Activated B cell treated with CpG ODN at 0.5 μM for 24 hours (primary cell): ENCODE measurements at regions of chr3 and their contacts with region 1.

Region 1: DNA sequence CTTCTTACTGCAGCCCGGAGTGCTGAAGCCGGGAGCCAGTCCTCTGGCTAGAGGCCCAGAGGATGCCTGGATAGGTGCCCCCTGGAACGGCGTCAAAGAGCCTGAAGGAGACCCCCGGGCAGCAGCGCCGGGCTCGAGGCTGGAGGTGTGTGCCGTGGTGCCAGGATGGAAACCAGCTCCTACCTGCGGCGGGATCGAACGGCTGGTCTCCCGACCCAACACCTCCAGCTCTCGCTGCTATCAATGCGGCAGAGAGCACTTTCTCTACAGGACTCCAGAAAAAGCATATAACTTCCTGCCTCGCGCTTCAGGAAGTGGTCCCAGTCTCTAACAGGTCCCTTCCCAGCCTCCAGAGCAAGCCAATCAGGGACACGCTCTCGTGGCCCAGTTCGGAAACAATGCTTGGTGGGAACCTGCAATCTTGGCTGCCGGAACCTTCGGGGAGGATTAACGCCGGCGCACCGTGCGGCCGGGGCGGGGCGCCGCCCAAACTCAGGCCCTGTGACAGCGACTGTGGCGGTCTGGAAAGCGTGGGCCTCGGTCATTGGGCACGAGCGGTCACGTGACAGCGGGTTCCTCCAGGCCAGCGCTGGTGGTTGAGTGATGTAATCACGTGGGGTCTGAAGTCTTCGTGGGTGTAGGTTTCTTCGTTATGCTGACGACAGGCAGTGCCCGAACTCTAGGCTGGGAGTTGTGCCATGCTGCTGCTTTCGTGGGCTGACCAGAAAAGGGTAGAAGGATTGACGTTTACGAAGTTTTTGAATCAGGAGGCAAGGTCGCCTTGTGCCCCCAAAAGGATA is at the start of gene SLC33A1:
- DNase-seq: peak; percentile 97
- ATAC-seq: peak; percentile 91
- H3K4me3 Mint-ChIP-seq: peak within 1 kb of the TSS; percentile 98
- H3K27ac Mint-ChIP-seq: peak within 1 kb of the TSS; percentile 98
- H3K4me1 Mint-ChIP-seq: peaks cover 41% of the 10 kb centered on the region
- H3K27me3 Mint-ChIP-seq: no peaks in the 10 kb centered on the region
- CTCF ChIP-seq: no peak
- total RNA-seq, gene SLC33A1: 19.8 and 23.3 TPM in 2 replicates

Region 2: DNA sequence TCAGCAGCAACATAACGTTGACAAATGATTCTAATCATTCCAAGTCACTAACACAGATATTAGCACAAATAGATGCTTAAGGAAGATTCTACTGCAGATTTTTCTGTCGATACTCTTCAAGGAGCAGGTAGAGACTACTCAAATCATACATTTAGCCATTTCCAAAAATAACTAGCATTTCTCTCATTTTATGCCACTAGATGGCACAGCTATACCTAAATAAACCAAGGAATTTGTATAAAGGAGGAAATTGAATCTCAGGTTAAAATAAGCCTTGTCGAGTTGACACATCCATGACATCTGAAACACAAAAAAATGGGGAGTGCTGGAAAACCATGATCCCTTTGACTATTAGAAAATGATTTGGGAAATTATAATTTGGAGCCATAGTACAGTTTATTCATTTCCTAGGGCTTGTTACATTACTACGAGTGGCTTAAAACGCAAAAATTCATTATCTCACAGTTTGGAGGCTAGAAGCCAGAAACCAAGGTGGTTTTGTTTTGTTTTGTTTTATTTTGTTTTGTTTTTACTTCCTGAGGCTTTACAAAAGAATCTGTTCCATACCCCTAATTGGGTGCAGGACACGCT is 501.3 kb before region 1 on chr3:
- CTCF ChIA-PET with region 1: no interaction called
- POLR2A ChIA-PET with region 1: no interaction called
- intact Hi-C with region 1: loop called (anchors 5 kb)
- DNase-seq: no peak
- ATAC-seq: no peak
- H3K4me3 Mint-ChIP-seq: no peak overlapping the region
- H3K27ac Mint-ChIP-seq: no peak overlapping the region
- H3K4me1 Mint-ChIP-seq: no peaks in the 10 kb centered on the region
- H3K27me3 Mint-ChIP-seq: peaks cover 2% of the 10 kb centered on the region
- CTCF ChIP-seq: no peak

Region 3: GRCh38 chr3:155727558-155728242 is 126.6 kb before region 1 on chr3:
- CTCF ChIA-PET with region 1: no interaction called
- POLR2A ChIA-PET with region 1: no interaction called
- intact Hi-C with region 1: no loop called
- DNase-seq: no peak
- ATAC-seq: no peak
- H3K4me3 Mint-ChIP-seq: no peak overlapping the region
- H3K27ac Mint-ChIP-seq: no peak overlapping the region
- H3K4me1 Mint-ChIP-seq: no peaks in the 10 kb centered on the region
- H3K27me3 Mint-ChIP-seq: peaks cover 2% of the 10 kb centered on the region
- CTCF ChIP-seq: no peak

Region 4: DNA sequence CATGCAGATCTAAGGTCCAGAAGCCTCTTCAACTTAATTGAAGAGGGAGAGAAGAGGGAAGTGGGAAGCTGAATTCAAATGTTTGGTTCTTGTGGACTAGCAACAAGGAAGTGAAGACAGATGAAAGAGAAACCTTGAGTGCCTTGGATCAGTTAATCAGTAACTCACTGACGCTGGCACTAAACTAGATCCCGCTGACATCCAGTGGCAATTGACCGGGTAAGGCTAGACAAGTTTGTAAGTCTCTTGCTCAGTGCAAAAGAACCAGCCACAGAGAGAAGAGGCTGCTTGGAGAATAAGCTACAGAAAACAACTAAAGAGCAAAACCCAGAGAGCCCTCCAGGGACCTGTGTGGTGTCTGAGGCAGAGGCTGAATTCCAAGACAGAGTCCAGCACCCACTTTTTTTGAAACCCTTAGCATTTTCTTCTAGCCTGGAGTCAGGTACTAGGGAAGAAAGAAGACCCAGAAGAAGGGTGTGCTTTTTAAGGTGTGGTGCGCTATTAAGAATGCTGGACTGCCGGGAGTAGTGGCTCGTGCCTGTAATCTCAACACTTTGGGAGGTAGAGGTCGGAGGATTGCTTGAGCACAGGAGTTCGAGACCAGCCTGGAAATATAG is 116.4 kb before region 1 on chr3:
- CTCF ChIA-PET with region 1: no interaction called
- POLR2A ChIA-PET with region 1: no interaction called
- intact Hi-C with region 1: no loop called
- DNase-seq: no peak
- ATAC-seq: peak; percentile 49
- H3K4me3 Mint-ChIP-seq: no peak overlapping the region
- H3K27ac Mint-ChIP-seq: no peak overlapping the region
- H3K4me1 Mint-ChIP-seq: peaks cover 13% of the 10 kb centered on the region
- H3K27me3 Mint-ChIP-seq: peaks cover 27% of the 10 kb centered on the region
- CTCF ChIP-seq: no peak

Region 5: DNA sequence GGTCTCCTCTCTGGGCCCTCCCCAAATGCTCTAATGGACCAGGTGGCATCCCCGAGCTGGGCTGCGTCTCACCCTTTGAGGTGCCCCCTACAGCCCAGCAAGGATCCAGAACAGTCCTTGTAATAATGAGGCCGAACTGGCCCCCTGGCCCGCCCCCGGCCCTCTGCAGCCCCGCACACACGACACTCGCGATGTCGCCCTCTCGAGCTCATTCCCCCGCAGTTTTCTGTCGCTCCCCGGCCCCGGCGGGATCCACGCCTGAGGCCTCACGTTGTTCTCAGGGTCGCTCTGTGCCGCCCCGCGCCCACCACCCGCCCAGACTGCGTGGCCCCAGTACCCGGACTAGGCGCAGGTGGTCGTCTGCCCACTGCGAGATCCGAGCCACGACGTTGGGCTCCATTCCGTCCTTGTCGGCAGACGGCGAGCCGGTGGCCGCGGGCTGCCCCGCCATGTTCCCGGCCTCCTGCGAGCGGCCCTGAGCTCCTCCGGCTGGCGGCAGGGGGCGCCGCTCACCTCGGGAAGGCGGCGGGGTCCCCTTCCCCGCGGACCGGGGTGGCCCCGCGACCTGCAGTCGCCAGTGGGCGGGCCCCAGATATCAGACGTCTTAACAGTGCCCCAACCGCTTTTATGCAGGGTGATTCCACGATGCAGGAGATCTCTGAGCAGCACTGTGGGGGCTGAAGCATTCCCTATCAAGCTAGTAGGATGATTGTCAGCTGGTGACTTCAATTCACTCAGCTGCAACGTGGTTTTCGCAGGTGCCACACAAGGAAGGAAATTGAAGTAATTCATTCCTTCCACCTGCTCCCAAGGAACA is 48.3 kb before region 1 on chr3 and contains the start of gene C3orf33:
- CTCF ChIA-PET with region 1: interaction called, 21 read pairs
- POLR2A ChIA-PET with region 1: interaction called, 21 read pairs
- intact Hi-C with region 1: loop called (anchors 1 kb)
- DNase-seq: peak; percentile 75
- ATAC-seq: peak; percentile 93
- H3K4me3 Mint-ChIP-seq: peak within 1 kb of the TSS; percentile 90
- H3K27ac Mint-ChIP-seq: peak within 1 kb of the TSS; percentile 80
- H3K4me1 Mint-ChIP-seq: peaks cover 3% of the 10 kb centered on the region
- H3K27me3 Mint-ChIP-seq: peaks cover 6% of the 10 kb centered on the region
- CTCF ChIP-seq: peak; percentile 82
- total RNA-seq, gene C3orf33: 1.6 and 2.4 TPM in 2 replicates

Region 6: GRCh38 chr3:156483961-156484787 is 629.8 kb after region 1 on chr3:
- CTCF ChIA-PET with region 1: no interaction called
- POLR2A ChIA-PET with region 1: interaction called, 3 read pairs
- intact Hi-C with region 1: loop called (anchors 5 kb)
- DNase-seq: peak; percentile 20
- ATAC-seq: peak; percentile 81
- H3K4me3 Mint-ChIP-seq: peak overlapping the region; percentile 79
- H3K27ac Mint-ChIP-seq: peak overlapping the region; percentile 93
- H3K4me1 Mint-ChIP-seq: peaks cover 32% of the 10 kb centered on the region
- H3K27me3 Mint-ChIP-seq: peaks cover under 1% of the 10 kb centered on the region
- CTCF ChIP-seq: no peak

Region 7: DNA sequence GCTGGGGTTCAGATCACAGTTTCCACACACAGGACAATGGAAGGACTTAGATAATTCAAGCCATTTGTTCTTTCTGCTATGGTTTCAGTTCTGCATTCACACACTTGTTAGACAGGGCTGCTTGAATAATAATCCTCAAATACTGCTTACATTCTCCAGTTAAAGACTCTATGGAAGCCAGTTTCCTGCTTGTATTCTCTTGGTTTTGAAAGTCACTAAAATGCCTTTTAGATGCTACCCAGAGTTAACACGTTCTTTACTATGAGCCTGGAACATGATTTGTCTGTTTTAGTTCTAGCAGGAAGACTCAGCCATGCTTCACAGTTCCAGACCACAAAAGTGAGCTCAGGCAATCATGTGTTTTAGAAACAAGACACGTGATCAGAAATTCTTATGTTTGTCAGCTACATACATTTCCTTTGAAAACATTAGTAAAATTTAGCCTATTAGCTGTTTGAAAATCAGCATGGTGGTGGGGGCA is 1124.2 kb after region 1 on chr3:
- CTCF ChIA-PET with region 1: no interaction called
- POLR2A ChIA-PET with region 1: no interaction called
- intact Hi-C with region 1: loop called (anchors 1 kb)
- DNase-seq: no peak
- ATAC-seq: peak; percentile 90
- H3K4me3 Mint-ChIP-seq: peak overlapping the region; percentile 61
- H3K27ac Mint-ChIP-seq: peak overlapping the region; percentile 95
- H3K4me1 Mint-ChIP-seq: peaks cover 51% of the 10 kb centered on the region
- H3K27me3 Mint-ChIP-seq: no peaks in the 10 kb centered on the region
- CTCF ChIP-seq: no peak